ENCODE measurements at regions of chr4 and their contacts with region 1.

Region 1: DNA sequence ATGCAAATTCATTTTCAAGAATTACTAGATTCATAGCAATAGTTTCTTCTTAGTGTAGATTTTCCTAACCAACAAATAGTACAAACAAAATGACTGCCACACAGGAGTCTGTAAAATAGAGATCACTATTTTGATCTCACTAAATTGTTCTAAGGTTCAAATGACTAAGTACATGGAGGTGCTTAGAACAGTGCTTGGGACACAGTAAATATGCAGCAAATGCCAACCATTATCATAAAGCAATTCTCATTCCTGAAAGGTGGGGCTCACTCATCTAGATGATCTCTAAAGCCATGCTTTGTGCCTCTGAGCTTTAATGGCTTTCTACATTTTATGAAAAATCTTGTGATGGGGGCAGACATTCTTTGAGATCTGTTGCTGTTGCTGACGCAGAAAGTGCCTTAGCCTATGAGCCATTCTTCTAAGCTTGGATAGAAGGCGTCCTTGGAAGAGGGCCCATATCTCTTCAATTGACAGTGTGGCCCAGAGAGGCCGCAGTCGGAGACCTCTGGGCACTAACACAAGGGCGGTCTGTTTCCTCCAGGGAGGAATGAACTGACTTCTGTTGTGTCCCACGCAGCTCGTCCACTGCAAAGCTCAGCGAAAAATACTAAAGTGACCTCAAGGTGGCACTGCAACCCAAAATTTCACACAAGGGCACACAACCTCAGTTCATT is 23.5 kb downstream of the TLR10 start:
- DNase-seq: peak; percentile 82
- H3K4me3 Mint-ChIP-seq: no peak overlapping the region
- H3K27ac Mint-ChIP-seq: no peak overlapping the region
- H3K4me1 Mint-ChIP-seq: peaks cover 18% of the 10 kb centered on the region
- H3K27me3 Mint-ChIP-seq: no peaks in the 10 kb centered on the region

Region 2: DNA sequence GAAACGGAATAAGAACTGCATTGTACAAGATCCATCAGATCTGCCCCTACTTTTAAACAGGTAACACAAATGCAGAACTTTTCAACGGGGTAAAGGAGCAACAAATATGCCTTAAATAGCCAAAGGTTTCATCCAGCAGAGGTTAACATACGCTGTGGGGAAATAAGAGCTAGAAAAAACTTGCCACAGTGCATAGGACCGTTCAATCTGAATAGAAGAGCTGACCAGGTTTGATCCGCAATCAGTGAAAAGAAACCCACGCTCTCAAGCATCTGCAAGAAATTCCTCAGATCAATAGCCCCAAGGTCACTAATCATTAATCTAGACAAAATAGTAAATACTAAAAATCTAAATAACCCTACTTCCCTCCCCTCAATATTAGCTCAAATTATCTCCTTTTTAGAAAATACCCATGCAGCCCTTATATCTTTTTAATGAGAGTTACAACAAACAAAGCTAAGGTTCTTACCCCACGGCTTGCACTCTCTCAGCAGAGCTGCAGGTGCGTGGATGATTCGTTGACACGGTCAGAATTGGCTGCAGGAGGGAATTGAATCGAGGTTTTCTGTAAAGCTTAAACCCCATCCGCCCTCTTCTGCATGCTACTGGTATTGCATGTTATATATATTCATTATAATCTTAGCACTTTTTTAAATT is 23.3 kb after region 1 on chr4 and contains the start of gene TLR10:
- CTCF ChIA-PET with region 1: interaction called, 127 read pairs
- intact Hi-C with region 1: loop called (anchors 1 kb)
- DNase-seq: peak; percentile 57
- H3K4me3 Mint-ChIP-seq: no peak within 1 kb of the TSS
- H3K27ac Mint-ChIP-seq: no peak within 1 kb of the TSS
- H3K4me1 Mint-ChIP-seq: peaks cover 4% of the 10 kb centered on the region
- H3K27me3 Mint-ChIP-seq: no peaks in the 10 kb centered on the region
- total RNA-seq, gene TLR10: 0.12 to 0.17 TPM

Region 3: DNA sequence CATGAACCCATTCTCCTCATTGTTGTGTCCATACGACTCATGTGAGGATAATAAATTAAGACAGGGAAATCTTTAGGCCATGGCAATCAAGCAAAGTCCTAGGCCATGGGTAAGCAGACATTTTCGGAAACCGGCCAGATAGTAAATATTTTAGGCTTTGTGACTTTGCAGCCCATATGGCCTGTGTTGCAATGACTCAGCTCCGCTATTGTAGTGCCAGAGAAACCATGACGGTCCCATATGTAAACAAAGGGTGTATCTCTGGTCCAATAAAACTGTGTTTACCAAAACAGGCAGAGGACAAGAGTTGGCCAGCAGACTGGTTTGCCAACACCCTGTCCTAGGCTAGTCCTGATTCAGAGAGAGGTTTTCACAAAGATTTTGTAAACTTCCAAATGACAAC is 113.4 kb after region 1 on chr4:
- CTCF ChIA-PET with region 1: interaction called, 16 read pairs
- intact Hi-C with region 1: no loop called
- DNase-seq: no peak
- H3K4me3 Mint-ChIP-seq: no peak overlapping the region
- H3K27ac Mint-ChIP-seq: no peak overlapping the region
- H3K4me1 Mint-ChIP-seq: no peaks in the 10 kb centered on the region
- H3K27me3 Mint-ChIP-seq: peaks cover 16% of the 10 kb centered on the region

Region 4: DNA sequence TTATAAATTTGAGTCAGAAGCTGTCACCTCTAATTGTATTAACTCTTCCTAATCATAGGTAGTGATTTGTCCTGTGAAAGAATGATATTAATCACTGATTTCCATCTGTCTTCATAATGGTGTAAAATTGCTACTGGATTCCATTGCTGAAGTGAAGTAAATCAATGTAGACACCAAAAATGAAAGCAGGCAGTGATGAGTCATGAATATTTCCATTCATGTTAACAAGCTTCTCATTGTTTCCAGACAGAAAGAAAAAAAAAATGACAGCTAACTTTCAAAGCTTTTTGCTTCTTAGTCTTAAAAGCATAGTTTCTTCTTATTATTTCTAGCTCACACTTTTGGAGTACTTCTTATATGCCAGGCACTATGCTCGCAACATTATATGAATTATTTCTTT is 129.9 kb after region 1 on chr4:
- CTCF ChIA-PET with region 1: interaction called, 24 read pairs
- intact Hi-C with region 1: loop called (anchors 1 kb)
- DNase-seq: no peak
- H3K4me3 Mint-ChIP-seq: peak overlapping the region; percentile 46
- H3K27ac Mint-ChIP-seq: peak overlapping the region; percentile 88
- H3K4me1 Mint-ChIP-seq: peaks cover 23% of the 10 kb centered on the region
- H3K27me3 Mint-ChIP-seq: no peaks in the 10 kb centered on the region